Right cardiac atrium (tissue), 5 donors: ENCODE measurements at regions of chr2 and their contacts with region 1.

Region 1: DNA sequence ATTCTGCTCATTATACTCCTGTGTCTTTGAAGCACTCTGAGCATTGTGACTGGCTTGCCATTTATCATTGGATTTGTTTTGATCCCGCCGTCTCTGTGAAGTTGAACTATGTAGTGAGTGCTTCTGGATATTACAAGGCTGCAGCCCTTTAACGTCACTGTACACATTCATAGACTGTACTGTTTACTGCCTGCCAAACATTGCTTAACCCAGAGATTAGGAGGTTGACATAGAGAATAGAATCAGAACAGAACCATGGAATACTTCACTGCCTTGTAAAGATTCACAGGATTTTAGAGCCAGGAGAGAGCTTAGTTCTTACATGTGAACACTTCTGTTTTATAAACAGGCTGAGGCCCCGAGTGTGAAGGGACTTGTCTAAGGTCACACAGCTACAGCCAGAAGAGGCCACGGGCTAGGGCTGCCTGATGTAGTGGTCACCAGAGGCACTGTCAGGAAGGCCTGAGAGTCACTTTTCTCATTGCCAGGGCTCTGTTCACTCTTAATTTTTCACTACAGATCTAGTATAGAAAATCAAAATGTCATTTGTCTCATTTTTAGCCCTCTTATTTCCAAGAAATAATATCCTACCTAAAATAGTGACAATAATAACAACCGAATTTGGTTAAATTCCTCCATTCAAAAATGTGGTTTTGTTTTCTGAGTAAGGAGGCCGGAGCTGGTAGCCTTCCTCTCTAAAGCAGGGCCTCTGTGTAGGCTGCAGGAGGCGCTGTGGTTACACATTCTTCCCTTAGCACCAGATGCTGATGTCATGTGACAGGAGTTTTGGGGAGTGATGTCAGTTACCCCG is 87.9 kb downstream of the UGGT1 start:
- DNase-seq: peak; percentile 65 to 81 (median 75)
- ATAC-seq: peak; percentile 92 to 96
- H3K4me3 ChIP-seq: no peak overlapping the region
- H3K27ac ChIP-seq: peak overlapping the region; percentile 72
- H3K4me1 ChIP-seq: no peaks in the 10 kb centered on the region
- H3K27me3 ChIP-seq: no peaks in the 10 kb centered on the region

Region 2: GRCh38 chr2:128232965-128233789 is 54.3 kb after region 1 on chr2:
- intact Hi-C with region 1: loop called in 3 of 4 experiments (anchors 5 to 10 kb)
- DNase-seq: peak; percentile 90 to 96 (median 96)
- ATAC-seq: peak; percentile 98
- H3K4me3 ChIP-seq: peak overlapping the region; percentile 52
- H3K27ac ChIP-seq: peak overlapping the region; percentile 50
- H3K4me1 ChIP-seq: no peaks in the 10 kb centered on the region
- H3K27me3 ChIP-seq: no peaks in the 10 kb centered on the region

Region 3: GRCh38 chr2:128321784-128322714 is 143.2 kb after region 1 on chr2:
- intact Hi-C with region 1: loop called in 2 of 4 experiments (anchors 10 kb)
- DNase-seq: peak; percentile 86 to 95 (median 94)
- ATAC-seq: peak; percentile 66 to 75
- H3K4me3 ChIP-seq: peak overlapping the region; percentile 73
- H3K27ac ChIP-seq: peak overlapping the region; percentile 65
- H3K4me1 ChIP-seq: peaks cover under 1% of the 10 kb centered on the region
- H3K27me3 ChIP-seq: no peaks in the 10 kb centered on the region